ENCODE measurements at regions of chr6 and their contacts with region 1.

Region 1: GRCh38 chr6:112269114-112269513 is 14.7 kb upstream of the LAMA4 start:
- DNase-seq: no peak
- H3K4me3 ChIP-seq: no peak overlapping the region
- H3K27ac ChIP-seq: no peak overlapping the region
- H3K4me1 ChIP-seq: no peaks in the 10 kb centered on the region
- H3K27me3 ChIP-seq: no peaks in the 10 kb centered on the region
- CTCF ChIP-seq: peak in 2 of 3 experiments; percentile 39 to 45; a peak in 2 of 4 replicates
- EP300 ChIP-seq: no peak
- POLR2A ChIP-seq: no peak
- RAD21 ChIP-seq: peak; percentile 48 to 55

Region 2: DNA sequence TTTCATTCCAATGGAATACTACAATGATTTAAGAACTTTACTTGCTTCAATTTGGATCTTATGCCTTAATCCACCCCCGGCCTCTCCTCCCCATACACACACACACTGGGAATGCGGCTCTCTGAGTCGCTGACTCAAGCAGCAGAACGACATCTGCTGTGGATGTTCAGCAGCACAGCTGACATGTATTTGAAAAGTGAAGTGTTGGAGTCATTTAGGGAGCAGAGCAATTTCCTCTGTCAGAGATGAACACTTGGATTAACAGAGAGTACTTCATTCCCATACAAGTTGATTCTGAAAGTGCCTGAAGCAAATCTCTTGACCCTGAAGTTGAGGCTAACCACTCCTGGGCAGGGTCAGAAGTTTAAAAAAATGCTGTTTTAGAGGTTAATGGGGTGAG is 13.1 kb after region 1 on chr6:
- CTCF ChIA-PET with region 1: interaction called, 10 read pairs
- POLR2A ChIA-PET with region 1: no interaction called
- DNase-seq: no peak
- H3K4me3 ChIP-seq: no peak overlapping the region
- H3K27ac ChIP-seq: no peak overlapping the region
- H3K4me1 ChIP-seq: no peaks in the 10 kb centered on the region
- H3K27me3 ChIP-seq: no peaks in the 10 kb centered on the region
- CTCF ChIP-seq: peak in 1 of 3 experiments; percentile 23; a peak in 1 of 4 replicates
- EP300 ChIP-seq: no peak
- POLR2A ChIP-seq: no peak
- RAD21 ChIP-seq: peak; percentile 5 to 22; a peak in 2 of 4 replicates

Region 3: GRCh38 chr6:112360498-112360897 is 91.4 kb after region 1 on chr6:
- CTCF ChIA-PET with region 1: no interaction called
- POLR2A ChIA-PET with region 1: no interaction called
- DNase-seq: no peak
- H3K4me3 ChIP-seq: no peak overlapping the region
- H3K27ac ChIP-seq: no peak overlapping the region
- H3K4me1 ChIP-seq: no peaks in the 10 kb centered on the region
- H3K27me3 ChIP-seq: no peaks in the 10 kb centered on the region
- CTCF ChIP-seq: no peak
- EP300 ChIP-seq: no peak
- POLR2A ChIP-seq: no peak
- RAD21 ChIP-seq: no peak